Dorsolateral prefrontal cortex (tissue), 120 donors: ENCODE measurements at regions of chr9 and their contacts with region 1.

Region 1: DNA sequence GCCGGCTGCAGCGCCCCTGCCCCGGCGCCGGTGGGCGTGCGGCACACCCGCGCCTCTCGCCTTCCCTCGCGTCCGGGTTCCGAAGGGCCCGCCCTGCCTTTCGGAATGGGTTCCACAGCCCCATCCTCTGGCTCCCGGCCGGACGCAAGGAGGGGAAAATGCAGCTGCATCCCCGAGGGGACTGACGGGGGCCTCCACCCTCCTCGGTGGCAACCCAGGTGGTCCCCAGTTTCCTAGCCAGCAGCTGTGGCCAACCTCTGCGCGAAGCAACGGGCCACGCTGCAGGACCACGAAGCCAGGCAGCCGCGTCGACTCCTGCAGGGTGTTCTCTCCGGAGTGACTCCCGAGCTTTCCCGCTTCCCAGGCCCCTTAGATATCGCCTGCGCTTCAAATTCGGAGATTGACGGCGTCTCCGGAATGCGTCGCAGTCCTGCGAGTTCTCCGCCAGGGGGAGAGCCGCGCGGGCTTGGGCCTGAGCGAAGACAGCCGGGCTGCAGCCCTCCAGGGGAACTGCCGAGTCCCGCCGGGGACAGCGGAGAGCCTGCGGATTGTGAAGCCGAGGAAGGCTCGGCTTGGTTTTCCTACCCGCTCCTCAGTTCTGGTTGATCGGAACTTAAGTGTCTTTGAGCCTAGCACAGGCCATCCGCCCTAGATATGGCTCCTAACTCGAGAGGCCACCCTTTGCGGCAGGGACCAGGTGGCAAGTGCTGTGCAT is 582 bp upstream of the APBA1 start:
- DNase-seq: peak; percentile 69 to 88 (median 82)
- H3K4me3 ChIP-seq: peak overlapping the region; percentile 66 to 96 (median 88)
- H3K27ac ChIP-seq: peak overlapping the region; percentile 80 to 98 (median 96)
- H3K27me3 ChIP-seq: no peaks in the 10 kb centered on the region
- CTCF ChIP-seq: peak; percentile 66 to 92 (median 83)

Region 2: GRCh38 chr9:69549310-69550202 is 123.2 kb before region 1 on chr9:
- intact Hi-C with region 1: loop called in 1 of 2 experiments (anchors 5 kb)
- DNase-seq: peak in 1 of 10 donors; percentile 22
- H3K4me3 ChIP-seq: peak overlapping the region in 8 of 59 donors; percentile 2 to 44 (median 15)
- H3K27ac ChIP-seq: peak overlapping the region in 27 of 59 donors; percentile 0 to 76 (median 44)
- H3K27me3 ChIP-seq: no peaks in the 10 kb centered on the region
- CTCF ChIP-seq: peak; percentile 66 to 98 (median 86)

Region 3: DNA sequence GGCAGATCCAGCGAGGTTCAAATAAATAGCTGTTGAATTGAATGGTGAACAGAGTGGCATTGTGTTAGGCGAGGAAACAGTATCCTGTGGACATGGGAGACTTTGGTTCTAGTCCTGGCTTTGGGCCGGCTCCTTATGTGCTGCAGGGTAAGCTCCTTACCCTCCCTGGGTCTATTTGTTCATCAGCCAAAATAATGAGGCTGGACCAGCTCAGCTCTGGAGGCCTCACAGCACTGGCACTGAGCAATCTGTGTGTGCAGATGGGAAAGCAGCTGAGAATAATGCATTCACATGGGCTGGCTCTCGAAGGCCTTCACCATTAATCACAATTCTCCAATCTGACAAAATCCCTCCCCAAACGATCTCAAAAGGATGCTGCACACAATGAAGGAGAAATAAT is 82.5 kb before region 1 on chr9:
- intact Hi-C with region 1: loop called (anchors 5 to 10 kb)
- DNase-seq: peak in 3 of 10 donors; percentile 29 to 83 (median 39)
- H3K4me3 ChIP-seq: no peak overlapping the region
- H3K27ac ChIP-seq: peak overlapping the region in 42 of 59 donors; percentile 4 to 84 (median 43)
- H3K27me3 ChIP-seq: no peaks in the 10 kb centered on the region
- CTCF ChIP-seq: no peak

Region 4: DNA sequence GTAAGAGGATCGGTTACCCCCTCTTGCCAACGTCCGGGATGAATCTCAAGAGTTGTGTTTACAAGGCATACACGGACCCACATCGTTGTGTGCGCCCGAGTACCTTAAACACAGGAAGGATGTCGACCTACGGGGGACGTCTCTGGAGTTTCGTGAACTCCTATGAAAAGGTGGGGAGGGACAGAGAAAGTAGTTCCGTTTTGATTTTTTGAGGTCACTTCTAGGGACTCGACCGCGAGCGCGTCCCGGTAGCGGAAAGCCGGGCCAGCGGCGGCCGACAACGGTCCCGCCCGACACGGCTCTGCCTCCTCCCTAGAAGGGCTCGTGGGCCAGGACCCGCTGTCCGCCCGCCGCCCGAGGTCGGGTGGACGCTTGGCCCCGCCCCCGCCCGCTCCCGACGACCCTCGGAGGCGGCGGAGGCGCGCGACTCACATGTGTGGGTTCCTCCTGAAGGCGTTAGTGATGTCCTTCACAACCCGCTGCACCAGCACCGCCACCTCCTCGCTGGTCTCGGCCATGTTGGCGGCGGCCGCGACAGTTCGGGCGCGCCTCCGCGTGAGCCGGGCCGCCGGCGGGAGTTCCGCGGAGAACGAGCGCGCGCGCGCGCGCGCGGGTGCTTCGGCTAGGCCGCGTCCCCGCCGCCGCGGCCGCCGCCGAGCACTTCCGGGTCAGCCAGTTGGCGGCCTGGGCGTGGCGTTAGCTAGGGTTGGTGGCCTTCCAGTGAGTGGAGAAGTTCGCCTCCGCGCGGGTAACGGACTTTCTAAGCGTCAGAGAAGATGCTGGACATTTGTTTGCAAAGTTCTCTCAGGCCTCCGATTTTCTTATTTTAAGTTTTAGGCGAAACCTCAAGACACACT is 86.9 kb after region 1 on chr9 and contains the start of gene PTAR1:
- intact Hi-C with region 1: loop called (anchors 1 kb)
- DNase-seq: peak; percentile 78 to 90 (median 84)
- H3K4me3 ChIP-seq: peak within 1 kb of the TSS; percentile 54 to 98 (median 86)
- H3K27ac ChIP-seq: peak within 1 kb of the TSS; percentile 67 to 98 (median 94)
- H3K27me3 ChIP-seq: no peaks in the 10 kb centered on the region
- CTCF ChIP-seq: peak in 40 of 56 donors; percentile 2 to 58 (median 24)
- total RNA-seq, gene PTAR1: 42.5 to 120 (median 68.6) TPM

Region 5: GRCh38 chr9:69919461-69920061 is 246.8 kb after region 1 on chr9:
- intact Hi-C with region 1: loop called (anchors 5 to 10 kb)
- DNase-seq: peak in 1 of 10 donors; percentile 14
- H3K4me3 ChIP-seq: no peak overlapping the region
- H3K27ac ChIP-seq: no peak overlapping the region
- H3K27me3 ChIP-seq: peaks cover 0 to 8% (median 0%) of the 10 kb centered on the region in 45 donors
- CTCF ChIP-seq: peak; percentile 62 to 90 (median 81)

Region 6: DNA sequence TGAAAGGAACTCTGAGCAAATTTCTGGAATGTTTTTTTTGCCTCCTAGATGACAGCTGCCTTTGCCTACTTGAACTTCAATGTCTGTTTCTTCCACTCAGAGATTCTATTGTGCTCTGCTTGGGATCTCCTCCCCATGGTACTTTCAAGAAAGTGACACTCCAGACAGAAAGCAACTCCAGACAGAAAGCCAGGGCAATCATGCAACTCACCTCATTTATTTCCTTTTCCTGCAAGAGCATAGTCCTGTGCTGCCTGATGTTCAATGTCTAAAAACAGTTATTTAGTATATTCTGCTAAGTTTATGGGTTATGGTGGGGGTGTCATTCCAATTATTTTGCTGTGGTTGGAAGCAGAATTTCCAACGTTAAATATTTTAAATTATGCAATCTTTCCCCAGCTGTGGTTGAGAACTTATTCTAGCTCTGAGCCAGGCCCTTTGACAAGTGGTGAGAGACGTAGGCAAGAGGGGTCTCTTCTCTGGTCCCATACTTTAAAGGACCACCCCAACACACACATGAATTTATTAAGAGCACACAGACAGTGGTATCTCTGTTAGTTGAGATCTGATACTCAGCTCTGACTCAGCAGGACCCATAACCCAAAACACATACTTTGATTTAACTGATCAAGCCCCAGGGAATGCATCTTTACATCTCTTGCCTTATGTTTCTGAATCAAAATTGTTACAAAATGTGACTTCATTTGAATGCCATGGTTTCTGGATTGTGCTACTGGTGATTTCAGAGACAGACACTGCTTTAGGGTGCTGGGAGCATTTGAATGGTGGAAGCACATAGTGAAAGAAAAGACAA is 331.4 kb after region 1 on chr9:
- intact Hi-C with region 1: no loop called
- DNase-seq: no peak
- H3K4me3 ChIP-seq: no peak overlapping the region
- H3K27ac ChIP-seq: no peak overlapping the region
- H3K27me3 ChIP-seq: peaks cover 0 to 2% (median 0%) of the 10 kb centered on the region in 45 donors
- CTCF ChIP-seq: no peak

Region 7: DNA sequence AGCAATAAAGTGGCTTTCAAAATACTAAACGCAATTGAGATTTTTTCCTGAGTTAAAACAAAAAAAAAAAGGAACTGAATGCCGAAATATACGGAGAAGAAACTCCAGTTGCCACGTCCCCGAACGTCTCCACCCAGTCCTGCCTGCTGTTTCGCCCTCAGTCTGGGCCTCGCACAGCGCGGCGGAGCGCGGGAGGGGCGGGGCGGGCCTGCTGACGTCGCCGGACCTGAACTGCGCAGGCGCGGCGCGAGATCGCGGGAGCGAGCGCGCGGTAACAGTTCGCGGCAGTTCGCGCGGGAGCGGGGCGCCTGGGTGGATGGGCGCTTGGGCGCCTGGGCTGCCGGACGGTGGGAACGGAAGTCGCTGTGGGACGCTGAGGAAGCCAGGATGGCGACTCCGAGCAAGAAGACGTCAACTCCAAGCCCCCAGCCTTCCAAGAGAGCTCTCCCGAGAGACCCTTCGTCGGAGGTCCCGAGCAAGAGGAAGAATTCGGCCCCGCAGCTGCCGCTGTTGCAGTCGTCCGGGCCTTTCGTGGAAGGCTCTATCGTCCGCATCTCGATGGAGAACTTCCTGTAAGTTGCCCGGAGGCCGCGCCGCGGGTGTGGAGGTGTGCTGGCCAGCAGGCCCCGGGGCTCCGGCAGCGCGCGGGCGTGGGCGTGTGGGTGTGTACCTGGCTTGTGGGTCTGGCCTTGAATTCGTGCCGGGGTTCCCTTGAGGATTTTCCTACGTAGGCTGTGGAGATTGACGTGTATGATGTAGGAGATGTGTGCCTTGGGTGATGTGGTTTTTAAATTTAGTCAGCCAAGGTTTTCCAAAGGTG is 586.1 kb after region 1 on chr9 and contains the start of gene SMC5:
- intact Hi-C with region 1: loop called in 1 of 2 experiments (anchors 5 kb)
- DNase-seq: peak; percentile 78 to 96 (median 87)
- H3K4me3 ChIP-seq: peak within 1 kb of the TSS; percentile 64 to 99 (median 92)
- H3K27ac ChIP-seq: peak within 1 kb of the TSS; percentile 63 to 97 (median 88)
- H3K27me3 ChIP-seq: no peaks in the 10 kb centered on the region
- CTCF ChIP-seq: peak in 21 of 56 donors; percentile 8 to 51 (median 28)
- total RNA-seq, gene SMC5: 12.0 to 37.3 (median 21.9) TPM

Region 8: GRCh38 chr9:70352802-70353201 is 680.0 kb after region 1 on chr9:
- intact Hi-C with region 1: no loop called
- DNase-seq: no peak
- H3K4me3 ChIP-seq: no peak overlapping the region
- H3K27ac ChIP-seq: peak overlapping the region in 7 of 59 donors; percentile 0 to 29 (median 8)
- H3K27me3 ChIP-seq: no peaks in the 10 kb centered on the region
- CTCF ChIP-seq: peak in 55 of 56 donors; percentile 15 to 87 (median 63)